B cell (primary cell): ENCODE measurements at regions of chr4 and their contacts with region 1.

Region 1: GRCh38 chr4:55866973-55867574 is 13.6 kb downstream of the EXOC1 start:
- DNase-seq: peak; percentile 64
- ATAC-seq: peak; percentile 76
- H3K4me3 ChIP-seq: no peak overlapping the region
- H3K4me3 Mint-ChIP-seq: no peak overlapping the region
- H3K27ac ChIP-seq: no peak overlapping the region
- H3K27ac Mint-ChIP-seq: no peak overlapping the region
- H3K4me1 ChIP-seq: peaks cover 0 to 4% of the 10 kb centered on the region in 2 donors
- H3K4me1 Mint-ChIP-seq: peaks cover 4% of the 10 kb centered on the region
- H3K27me3 ChIP-seq: no peaks in the 10 kb centered on the region
- H3K27me3 Mint-ChIP-seq: no peaks in the 10 kb centered on the region
- CTCF ChIP-seq: peak; percentile 96

Region 2: GRCh38 chr4:55312489-55313101 is 554.5 kb before region 1 on chr4:
- CTCF ChIA-PET with region 1: interaction called, 12 read pairs
- POLR2A ChIA-PET with region 1: no interaction called
- intact Hi-C with region 1: loop called (anchors 1 kb)
- DNase-seq: peak; percentile 34
- ATAC-seq: peak; percentile 39
- H3K4me3 ChIP-seq: no peak overlapping the region
- H3K4me3 Mint-ChIP-seq: no peak overlapping the region
- H3K27ac ChIP-seq: no peak overlapping the region
- H3K27ac Mint-ChIP-seq: no peak overlapping the region
- H3K4me1 ChIP-seq: no peaks in the 10 kb centered on the region
- H3K4me1 Mint-ChIP-seq: no peaks in the 10 kb centered on the region
- H3K27me3 ChIP-seq: no peaks in the 10 kb centered on the region
- H3K27me3 Mint-ChIP-seq: peaks cover 17% of the 10 kb centered on the region
- CTCF ChIP-seq: peak; percentile 53

Region 3: GRCh38 chr4:55345980-55346850 is 520.9 kb before region 1 on chr4 and contains the start of gene SRD5A3:
- CTCF ChIA-PET with region 1: interaction called, 5 read pairs
- POLR2A ChIA-PET with region 1: no interaction called
- intact Hi-C with region 1: loop called (anchors 1 kb)
- DNase-seq: peak; percentile 85
- ATAC-seq: peak; percentile 89
- H3K4me3 ChIP-seq: peak within 1 kb of the TSS; percentile 56 to 84 (median 73)
- H3K4me3 Mint-ChIP-seq: peak within 1 kb of the TSS; percentile 85
- H3K27ac ChIP-seq: peak within 1 kb of the TSS; percentile 69 to 85
- H3K27ac Mint-ChIP-seq: peak within 1 kb of the TSS; percentile 94
- H3K4me1 ChIP-seq: peaks cover 4 to 9% of the 10 kb centered on the region in 2 donors
- H3K4me1 Mint-ChIP-seq: peaks cover 10% of the 10 kb centered on the region
- H3K27me3 ChIP-seq: no peaks in the 10 kb centered on the region
- H3K27me3 Mint-ChIP-seq: no peaks in the 10 kb centered on the region
- CTCF ChIP-seq: peak; percentile 99
- total RNA-seq, gene SRD5A3: 3.6 and 4.0 TPM in 2 replicates

Region 4: GRCh38 chr4:55409468-55410171 is 457.5 kb before region 1 on chr4:
- CTCF ChIA-PET with region 1: interaction called, 27 read pairs
- POLR2A ChIA-PET with region 1: no interaction called
- intact Hi-C with region 1: loop called (anchors 1 kb)
- DNase-seq: peak; percentile 85
- ATAC-seq: peak; percentile 93
- H3K4me3 ChIP-seq: no peak overlapping the region
- H3K4me3 Mint-ChIP-seq: peak overlapping the region; percentile 36
- H3K27ac ChIP-seq: peak overlapping the region in 1 of 2 donors; percentile 77
- H3K27ac Mint-ChIP-seq: peak overlapping the region; percentile 71
- H3K4me1 ChIP-seq: peaks cover 14% of the 10 kb centered on the region in 2 donors
- H3K4me1 Mint-ChIP-seq: peaks cover 30% of the 10 kb centered on the region
- H3K27me3 ChIP-seq: no peaks in the 10 kb centered on the region
- H3K27me3 Mint-ChIP-seq: no peaks in the 10 kb centered on the region
- CTCF ChIP-seq: peak; percentile 73

Region 5: DNA sequence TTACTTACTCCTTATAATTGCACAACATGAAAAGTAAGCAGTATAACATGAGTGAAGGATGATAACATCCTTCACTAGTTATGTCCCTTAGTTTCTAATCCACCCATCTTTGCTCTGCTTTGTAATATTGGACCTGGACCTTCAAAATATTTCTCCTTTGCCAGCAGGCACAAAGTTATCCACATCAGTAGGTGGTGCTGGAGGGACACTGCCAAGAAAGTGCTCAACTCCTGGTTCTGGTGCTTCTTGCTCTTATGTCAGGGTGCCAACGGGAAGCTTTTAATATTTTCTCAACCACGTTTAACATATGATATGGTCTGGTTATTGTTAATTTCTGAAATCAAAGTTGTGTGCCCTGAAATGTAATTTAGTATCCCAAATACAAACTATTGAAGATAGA is 422.2 kb before region 1 on chr4:
- CTCF ChIA-PET with region 1: interaction called, 12 read pairs
- POLR2A ChIA-PET with region 1: no interaction called
- intact Hi-C with region 1: no loop called
- DNase-seq: peak; percentile 8
- ATAC-seq: no peak
- H3K4me3 ChIP-seq: no peak overlapping the region
- H3K4me3 Mint-ChIP-seq: no peak overlapping the region
- H3K27ac ChIP-seq: no peak overlapping the region
- H3K27ac Mint-ChIP-seq: no peak overlapping the region
- H3K4me1 ChIP-seq: no peaks in the 10 kb centered on the region
- H3K4me1 Mint-ChIP-seq: peaks cover 2% of the 10 kb centered on the region
- H3K27me3 ChIP-seq: no peaks in the 10 kb centered on the region
- H3K27me3 Mint-ChIP-seq: no peaks in the 10 kb centered on the region
- CTCF ChIP-seq: no peak

Region 6: DNA sequence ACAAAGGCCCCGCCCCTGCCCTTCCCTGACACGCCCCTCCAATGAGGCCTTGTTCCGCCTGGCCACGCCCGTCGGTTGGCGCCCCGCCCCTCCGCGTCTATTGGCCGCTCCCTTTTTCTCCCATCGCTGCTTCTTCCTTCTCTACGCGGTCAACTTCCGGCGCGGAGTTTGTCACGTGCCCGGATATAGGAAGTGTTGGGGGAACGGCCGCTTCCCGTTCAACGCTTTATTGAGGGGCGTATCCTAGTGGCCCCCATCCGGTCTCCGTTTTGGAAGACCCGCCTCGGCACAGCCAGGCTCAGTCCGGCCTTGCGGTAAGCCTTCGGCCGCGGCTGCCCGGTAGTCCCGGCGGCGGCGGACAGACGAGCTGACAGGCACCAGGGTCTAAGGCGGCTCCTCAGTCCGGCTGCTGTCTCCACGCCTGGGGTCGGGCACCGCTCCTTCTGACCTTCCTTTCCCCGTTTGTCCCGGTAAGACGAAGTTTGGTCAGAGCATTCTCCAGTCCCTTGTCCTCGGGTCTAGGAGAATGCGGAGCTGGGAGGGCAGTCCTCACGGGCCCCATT is 13.5 kb before region 1 on chr4 and contains the start of gene EXOC1:
- CTCF ChIA-PET with region 1: interaction called, 15 read pairs
- POLR2A ChIA-PET with region 1: no interaction called
- intact Hi-C with region 1: no loop called
- DNase-seq: peak; percentile 97
- ATAC-seq: peak; percentile 100
- H3K4me3 ChIP-seq: peak within 1 kb of the TSS; percentile 85 to 98 (median 97)
- H3K4me3 Mint-ChIP-seq: no peak within 1 kb of the TSS
- H3K27ac ChIP-seq: peak within 1 kb of the TSS; percentile 71 to 86
- H3K27ac Mint-ChIP-seq: peak within 1 kb of the TSS; percentile 94
- H3K4me1 ChIP-seq: peaks cover 11 to 12% of the 10 kb centered on the region in 2 donors
- H3K4me1 Mint-ChIP-seq: peaks cover 13% of the 10 kb centered on the region
- H3K27me3 ChIP-seq: peaks cover 0 to 14% (median 2%) of the 10 kb centered on the region in 4 experiments
- H3K27me3 Mint-ChIP-seq: peaks cover 12% of the 10 kb centered on the region
- CTCF ChIP-seq: no peak
- total RNA-seq, gene EXOC1: 42.5 and 46.7 TPM in 2 replicates

Region 7: GRCh38 chr4:55887594-55887993 is 20.5 kb after region 1 on chr4:
- CTCF ChIA-PET with region 1: interaction called, 12 read pairs
- POLR2A ChIA-PET with region 1: no interaction called
- intact Hi-C with region 1: no loop called
- DNase-seq: no peak
- ATAC-seq: no peak
- H3K4me3 ChIP-seq: no peak overlapping the region
- H3K4me3 Mint-ChIP-seq: no peak overlapping the region
- H3K27ac ChIP-seq: no peak overlapping the region
- H3K27ac Mint-ChIP-seq: no peak overlapping the region
- H3K4me1 ChIP-seq: peaks cover 0 to 8% of the 10 kb centered on the region in 2 donors
- H3K4me1 Mint-ChIP-seq: peaks cover 13% of the 10 kb centered on the region
- H3K27me3 ChIP-seq: no peaks in the 10 kb centered on the region
- H3K27me3 Mint-ChIP-seq: no peaks in the 10 kb centered on the region
- CTCF ChIP-seq: no peak